AG04449 (cell line): ENCODE measurements at regions of chr11 and their contacts with region 1.

Region 1: GRCh38 chr11:66694732-66695207 is 17.1 kb upstream of the RBM4B start:
- DNase-seq: peak; percentile 82
- H3K4me3 ChIP-seq: no peak overlapping the region
- CTCF ChIP-seq: peak; percentile 78

Region 2: DNA sequence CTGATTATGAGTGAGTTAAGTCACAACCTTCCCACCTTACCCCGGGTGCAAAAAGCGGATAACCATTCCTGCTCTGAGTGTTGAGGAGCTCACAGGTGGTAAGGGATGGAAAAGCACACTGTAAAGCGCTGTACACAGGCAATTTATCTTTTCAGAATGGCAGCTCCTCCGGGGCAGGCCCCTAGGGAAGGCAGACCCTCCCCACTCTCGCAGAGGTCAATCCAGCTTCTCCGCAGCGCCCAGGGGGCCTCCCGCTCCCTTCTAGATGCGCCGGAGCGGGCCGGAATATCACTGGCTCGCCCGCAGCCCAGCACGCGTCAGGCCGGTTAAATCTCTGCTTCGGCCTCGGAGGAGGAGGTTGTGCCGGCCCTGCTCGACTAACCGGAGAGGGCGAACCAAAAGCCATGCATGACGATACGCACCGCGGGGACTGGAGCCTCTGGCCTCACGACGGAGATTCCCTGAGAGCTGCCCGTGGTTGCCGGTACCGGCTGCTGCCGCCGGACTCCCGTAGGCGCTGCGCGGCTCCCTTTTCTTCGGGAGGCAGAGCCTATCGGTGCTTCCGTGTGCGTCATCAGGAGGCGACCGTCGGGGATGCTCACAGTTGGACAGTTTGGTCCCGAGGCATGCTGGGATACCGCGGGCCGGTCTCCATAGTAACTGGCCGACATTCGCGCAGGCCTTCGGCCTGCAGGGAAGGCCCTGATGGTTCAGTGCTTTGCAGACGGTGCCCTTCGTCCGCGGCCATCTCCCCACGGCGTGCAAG is 350.0 kb before region 1 on chr11 and contains the start of gene BRMS1:
- CTCF ChIA-PET with region 1: no interaction called
- POLR2A ChIA-PET with region 1: no interaction called
- DNase-seq: peak; percentile 79
- H3K4me3 ChIP-seq: peak within 1 kb of the TSS; percentile 99
- CTCF ChIP-seq: no peak

Region 3: GRCh38 chr11:66710384-66710927 is 15.7 kb after region 1 on chr11:
- CTCF ChIA-PET with region 1: interaction called, 11 read pairs
- POLR2A ChIA-PET with region 1: no interaction called
- DNase-seq: no peak
- H3K4me3 ChIP-seq: no peak overlapping the region
- CTCF ChIP-seq: no peak

Region 4: GRCh38 chr11:66768088-66768521 is 73.3 kb after region 1 on chr11:
- CTCF ChIA-PET with region 1: no interaction called
- POLR2A ChIA-PET with region 1: no interaction called
- DNase-seq: no peak
- H3K4me3 ChIP-seq: no peak overlapping the region
- CTCF ChIP-seq: no peak